Activated CD8-positive, alpha-beta T cell treated with anti-CD3 and anti-CD28 coated beads for 36 hours (primary cell): ENCODE measurements at regions of chr6 and their contacts with region 1.

Region 1: DNA sequence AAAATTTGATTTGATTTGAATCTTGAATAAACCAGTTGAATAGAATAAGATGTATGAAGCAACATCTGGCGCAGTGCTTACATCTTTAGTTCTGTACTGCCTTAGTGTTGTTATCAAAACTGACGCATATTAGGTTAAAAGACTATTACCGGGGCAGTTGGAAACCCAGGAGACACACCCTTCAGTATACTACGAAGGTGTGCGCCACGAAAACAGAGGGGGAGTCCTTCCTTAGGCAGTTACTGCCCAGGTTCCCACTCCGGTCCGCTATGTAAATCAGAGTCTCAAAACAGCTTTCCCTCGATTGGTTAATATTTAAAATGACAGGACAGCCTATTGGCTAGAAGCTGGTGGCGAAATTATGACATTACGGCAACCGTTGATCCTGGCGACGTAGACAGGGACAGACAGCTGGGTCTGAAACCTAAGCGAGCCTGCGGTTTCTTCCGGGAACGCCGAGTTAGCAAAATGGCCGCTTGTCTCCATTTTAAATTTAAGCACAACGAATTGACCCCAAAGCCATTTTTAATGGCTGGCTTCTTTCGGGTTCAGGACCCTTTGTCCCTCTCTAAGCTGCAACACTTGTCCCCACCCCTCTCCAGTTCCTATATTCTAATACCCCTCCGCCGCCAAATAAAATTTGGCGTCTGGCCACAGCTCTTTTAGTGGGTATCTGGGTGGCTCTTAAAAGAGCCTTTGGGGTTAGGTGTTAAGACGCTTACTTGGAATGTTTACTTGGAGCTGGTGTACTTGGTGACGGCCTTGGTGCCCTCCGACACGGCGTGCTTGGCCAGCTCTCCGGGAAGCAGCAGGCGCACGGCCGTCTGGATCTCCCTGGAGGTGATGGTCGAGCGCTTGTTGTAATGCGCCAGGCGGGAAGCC is 35.8 kb downstream of the HFE start:
- DNase-seq: peak; percentile 98
- ATAC-seq: peak; percentile 60
- H3K4me3 Mint-ChIP-seq: peak overlapping the region; percentile 84
- H3K27ac Mint-ChIP-seq: peak overlapping the region; percentile 98
- H3K4me1 Mint-ChIP-seq: peaks cover 27% of the 10 kb centered on the region
- H3K27me3 Mint-ChIP-seq: no peaks in the 10 kb centered on the region
- CTCF ChIP-seq: no peak

Region 2: GRCh38 chr6:26003102-26003694 is 119.8 kb before region 1 on chr6:
- CTCF ChIA-PET with region 1: no interaction called
- POLR2A ChIA-PET with region 1: no interaction called
- intact Hi-C with region 1: no loop called
- DNase-seq: peak; percentile 63
- ATAC-seq: peak; percentile 49
- H3K4me3 Mint-ChIP-seq: no peak overlapping the region
- H3K27ac Mint-ChIP-seq: no peak overlapping the region
- H3K4me1 Mint-ChIP-seq: no peaks in the 10 kb centered on the region
- H3K27me3 Mint-ChIP-seq: no peaks in the 10 kb centered on the region
- CTCF ChIP-seq: peak; percentile 89

Region 3: DNA sequence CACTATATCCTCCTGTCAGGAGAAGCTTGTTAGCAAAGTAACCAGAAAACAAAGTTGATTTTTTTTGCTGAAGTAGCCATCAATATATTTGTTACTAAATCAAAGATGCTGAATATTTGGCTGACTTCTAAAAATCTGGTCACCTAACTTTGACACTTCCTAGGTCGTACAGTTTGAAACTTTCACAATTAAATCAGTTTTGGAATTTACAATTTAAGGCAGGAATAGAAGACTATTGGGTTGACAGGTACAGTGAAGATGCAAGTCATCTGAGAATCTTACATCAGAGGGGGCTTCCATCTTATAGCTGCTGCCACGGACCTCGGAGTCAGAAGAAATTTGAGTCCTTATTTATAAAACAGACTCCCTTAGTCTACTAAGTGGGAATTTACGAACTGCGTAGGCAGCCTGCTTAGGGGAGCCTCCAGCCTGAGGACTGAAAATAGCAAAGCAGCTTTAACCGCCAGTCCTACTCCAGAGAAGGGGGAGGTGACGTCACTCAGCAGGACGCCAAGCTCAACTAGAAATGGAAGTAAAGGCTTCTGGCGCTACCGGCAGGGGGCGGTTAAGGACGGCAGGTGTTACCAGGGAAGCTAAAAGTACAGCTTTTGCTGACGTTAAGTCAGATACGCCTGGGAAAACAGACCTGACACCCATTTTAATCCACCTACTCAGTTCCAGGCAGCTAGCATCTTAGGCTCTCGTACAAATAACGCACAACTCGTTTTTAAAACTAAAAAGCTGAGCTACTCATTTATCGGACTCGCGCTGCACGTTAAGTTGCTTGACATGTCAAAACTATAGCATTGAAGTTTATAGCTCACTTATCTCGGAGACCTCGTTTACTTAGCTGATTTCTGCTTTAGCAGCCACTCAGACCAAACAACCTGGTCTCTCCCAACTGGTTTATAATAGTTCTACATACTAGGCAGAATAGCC is 96.9 kb before region 1 on chr6:
- CTCF ChIA-PET with region 1: interaction called, 3 read pairs
- POLR2A ChIA-PET with region 1: interaction called, 73 read pairs
- intact Hi-C with region 1: loop called (anchors 2 kb)
- DNase-seq: peak; percentile 97
- ATAC-seq: peak; percentile 41
- H3K4me3 Mint-ChIP-seq: peak overlapping the region; percentile 77
- H3K27ac Mint-ChIP-seq: peak overlapping the region; percentile 95
- H3K4me1 Mint-ChIP-seq: peaks cover 51% of the 10 kb centered on the region
- H3K27me3 Mint-ChIP-seq: peaks cover 2% of the 10 kb centered on the region
- CTCF ChIP-seq: peak; percentile 75

Region 4: GRCh38 chr6:26054857-26055669 is 68.0 kb before region 1 on chr6:
- CTCF ChIA-PET with region 1: no interaction called
- POLR2A ChIA-PET with region 1: interaction called, 64 read pairs
- intact Hi-C with region 1: loop called (anchors 1 kb)
- DNase-seq: peak; percentile 94
- ATAC-seq: peak; percentile 73
- H3K4me3 Mint-ChIP-seq: peak overlapping the region; percentile 92
- H3K27ac Mint-ChIP-seq: peak overlapping the region; percentile 99
- H3K4me1 Mint-ChIP-seq: peaks cover 17% of the 10 kb centered on the region
- H3K27me3 Mint-ChIP-seq: peaks cover 3% of the 10 kb centered on the region
- CTCF ChIP-seq: no peak

Region 5: GRCh38 chr6:26136321-26136720 is 13.3 kb after region 1 on chr6:
- CTCF ChIA-PET with region 1: interaction called, 4 read pairs
- POLR2A ChIA-PET with region 1: interaction called, 46 read pairs
- intact Hi-C with region 1: no loop called
- DNase-seq: no peak
- ATAC-seq: no peak
- H3K4me3 Mint-ChIP-seq: no peak overlapping the region
- H3K27ac Mint-ChIP-seq: peak overlapping the region; percentile 25
- H3K4me1 Mint-ChIP-seq: peaks cover 18% of the 10 kb centered on the region
- H3K27me3 Mint-ChIP-seq: no peaks in the 10 kb centered on the region
- CTCF ChIP-seq: no peak

Region 6: GRCh38 chr6:26183581-26184366 is 60.7 kb after region 1 on chr6:
- CTCF ChIA-PET with region 1: interaction called, 3 read pairs
- POLR2A ChIA-PET with region 1: interaction called, 59 read pairs
- intact Hi-C with region 1: no loop called
- DNase-seq: peak; percentile 72
- ATAC-seq: peak; percentile 82
- H3K4me3 Mint-ChIP-seq: peak overlapping the region; percentile 76
- H3K27ac Mint-ChIP-seq: peak overlapping the region; percentile 84
- H3K4me1 Mint-ChIP-seq: peaks cover 38% of the 10 kb centered on the region
- H3K27me3 Mint-ChIP-seq: no peaks in the 10 kb centered on the region
- CTCF ChIP-seq: no peak

Region 7: DNA sequence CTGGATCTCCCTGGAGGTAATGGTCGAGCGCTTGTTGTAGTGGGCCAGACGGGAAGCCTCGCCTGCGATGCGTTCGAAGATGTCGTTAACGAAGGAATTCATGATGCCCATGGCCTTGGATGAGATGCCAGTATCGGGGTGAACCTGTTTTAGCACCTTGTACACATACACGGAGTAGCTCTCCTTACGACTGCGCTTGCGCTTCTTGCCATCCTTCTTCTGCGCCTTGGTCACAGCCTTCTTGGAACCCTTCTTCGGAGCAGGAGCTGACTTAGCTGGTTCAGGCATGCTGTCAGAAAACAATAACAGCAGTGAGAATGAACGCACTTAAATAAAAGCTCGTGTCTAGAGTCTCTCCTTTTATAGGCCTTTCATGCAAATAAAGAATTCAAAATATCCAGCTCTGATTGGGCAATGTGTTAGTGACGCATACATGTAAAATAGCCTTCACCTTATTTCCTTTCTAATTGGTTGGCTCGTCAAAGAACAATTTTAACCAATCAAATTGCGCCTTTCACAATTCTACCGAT is 93.4 kb after region 1 on chr6:
- CTCF ChIA-PET with region 1: no interaction called
- POLR2A ChIA-PET with region 1: interaction called, 67 read pairs
- intact Hi-C with region 1: no loop called
- DNase-seq: peak; percentile 87
- ATAC-seq: peak; percentile 80
- H3K4me3 Mint-ChIP-seq: no peak overlapping the region
- H3K27ac Mint-ChIP-seq: no peak overlapping the region
- H3K4me1 Mint-ChIP-seq: peaks cover 11% of the 10 kb centered on the region
- H3K27me3 Mint-ChIP-seq: no peaks in the 10 kb centered on the region
- CTCF ChIP-seq: no peak

Region 8: GRCh38 chr6:26556263-26557070 is 433.4 kb after region 1 on chr6:
- CTCF ChIA-PET with region 1: no interaction called
- POLR2A ChIA-PET with region 1: no interaction called
- intact Hi-C with region 1: no loop called
- DNase-seq: peak; percentile 73
- ATAC-seq: peak; percentile 18
- H3K4me3 Mint-ChIP-seq: peak overlapping the region; percentile 37
- H3K27ac Mint-ChIP-seq: peak overlapping the region; percentile 17
- H3K4me1 Mint-ChIP-seq: peaks cover 10% of the 10 kb centered on the region
- H3K27me3 Mint-ChIP-seq: no peaks in the 10 kb centered on the region
- CTCF ChIP-seq: no peak